PC-9 (cell line): ENCODE measurements at regions of chr19 and their contacts with region 1.

Region 1: DNA sequence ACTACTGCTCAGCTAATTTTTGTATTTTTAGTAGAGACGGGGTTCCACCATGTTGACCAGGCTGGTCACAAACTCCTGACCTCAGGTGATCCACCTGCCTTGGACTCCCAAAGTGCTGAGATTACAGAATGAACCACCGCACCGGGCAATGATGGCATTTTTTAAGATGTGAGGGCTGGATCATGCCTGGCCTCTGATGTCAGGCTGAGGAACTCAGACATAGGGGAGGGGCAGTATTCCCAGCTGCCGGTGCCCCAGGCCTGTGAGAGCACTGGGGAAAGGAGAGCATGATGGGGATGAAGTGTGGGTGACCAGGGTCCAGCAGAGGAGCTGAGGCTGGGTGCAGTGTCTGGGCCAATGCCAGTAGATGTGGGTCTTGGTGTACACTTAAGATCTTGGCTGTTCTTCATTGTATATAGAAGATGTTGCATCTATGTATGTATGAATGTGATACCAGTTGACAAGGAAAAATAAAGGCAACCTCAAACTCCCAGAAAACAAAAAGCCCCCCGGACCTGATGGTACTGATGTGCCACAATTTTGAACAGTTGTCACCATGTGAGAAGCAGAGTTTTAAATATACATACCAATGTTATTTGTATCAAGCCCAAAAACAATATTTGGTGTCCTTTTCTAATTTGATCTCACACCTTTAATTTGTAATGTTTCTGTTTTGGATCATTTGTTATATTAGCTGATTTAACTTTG is 3.4 kb upstream of the PLVAP start:
- DNase-seq: no peak
- H3K4me3 ChIP-seq: no peak overlapping the region
- H3K27ac ChIP-seq: no peak overlapping the region
- H3K4me1 ChIP-seq: peaks cover 9% of the 10 kb centered on the region
- H3K27me3 ChIP-seq: peaks cover 7% of the 10 kb centered on the region; the same call in 1 of the 2 replicates
- CTCF ChIP-seq: no peak

Region 2: DNA sequence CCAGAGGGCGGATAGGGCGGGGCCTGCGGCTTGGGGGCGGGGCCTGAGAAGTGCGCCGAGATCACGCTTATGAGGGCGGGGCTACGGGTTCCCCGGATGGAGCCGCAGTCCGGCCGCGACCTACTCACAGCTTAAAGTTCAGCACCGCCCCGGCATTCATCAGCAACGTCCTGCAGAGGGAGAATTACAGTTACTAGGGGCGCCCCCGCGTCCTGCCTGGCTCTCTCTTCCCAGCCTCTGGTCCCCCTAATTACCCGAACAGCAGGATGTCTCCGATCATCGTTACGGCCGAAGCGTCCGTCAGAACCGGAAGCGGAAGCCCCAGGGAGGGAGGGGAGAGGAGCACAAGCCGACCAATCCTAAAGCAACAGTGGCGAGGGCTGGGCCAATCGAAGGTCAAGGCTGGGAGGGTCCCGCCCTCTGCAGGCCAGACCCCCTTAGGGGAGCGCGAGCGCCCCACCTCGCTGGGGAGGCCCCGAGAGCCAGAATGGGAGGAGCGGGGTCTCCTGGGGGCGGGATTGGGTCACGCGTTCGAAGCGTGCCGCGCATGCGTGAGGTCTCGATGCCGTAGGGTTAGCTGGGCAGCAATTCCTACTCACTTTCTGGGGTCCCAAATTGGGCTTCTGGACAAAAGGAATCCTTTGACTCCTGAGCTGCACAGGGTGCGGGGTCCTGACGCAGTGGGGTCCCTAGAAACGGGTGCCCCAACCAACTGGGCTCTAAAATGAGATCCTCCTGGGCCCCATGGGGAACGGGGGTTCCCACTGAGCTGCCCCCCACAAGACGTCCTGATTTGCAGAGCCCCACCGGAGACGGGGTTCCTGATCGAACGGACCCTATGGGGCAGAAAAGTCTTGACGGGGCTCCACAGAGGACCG is 720.5 kb before region 1 on chr19 and contains the start of gene SMIM7:
- CTCF ChIA-PET with region 1: no interaction called
- POLR2A ChIA-PET with region 1: interaction called, 29 read pairs
- intact Hi-C with region 1: no loop called
- DNase-seq: peak; percentile 96 to 99
- H3K4me3 ChIP-seq: peak within 1 kb of the TSS; percentile 92
- H3K27ac ChIP-seq: peak within 1 kb of the TSS; percentile 40; the same call in 1 of the 2 replicates
- H3K4me1 ChIP-seq: peaks cover 22% of the 10 kb centered on the region
- H3K27me3 ChIP-seq: no peaks in the 10 kb centered on the region
- CTCF ChIP-seq: peak; percentile 25; the same call in 1 of the 2 replicates
- total RNA-seq, gene SMIM7: 69.7 and 72.9 TPM in 2 replicates

Region 3: GRCh38 chr19:17323964-17324332 is 56.6 kb before region 1 on chr19:
- CTCF ChIA-PET with region 1: no interaction called
- POLR2A ChIA-PET with region 1: no interaction called
- intact Hi-C with region 1: no loop called
- DNase-seq: no peak
- H3K4me3 ChIP-seq: no peak overlapping the region
- H3K27ac ChIP-seq: no peak overlapping the region
- H3K4me1 ChIP-seq: peaks cover 23% of the 10 kb centered on the region
- H3K27me3 ChIP-seq: no peaks in the 10 kb centered on the region
- CTCF ChIP-seq: no peak

Region 4: DNA sequence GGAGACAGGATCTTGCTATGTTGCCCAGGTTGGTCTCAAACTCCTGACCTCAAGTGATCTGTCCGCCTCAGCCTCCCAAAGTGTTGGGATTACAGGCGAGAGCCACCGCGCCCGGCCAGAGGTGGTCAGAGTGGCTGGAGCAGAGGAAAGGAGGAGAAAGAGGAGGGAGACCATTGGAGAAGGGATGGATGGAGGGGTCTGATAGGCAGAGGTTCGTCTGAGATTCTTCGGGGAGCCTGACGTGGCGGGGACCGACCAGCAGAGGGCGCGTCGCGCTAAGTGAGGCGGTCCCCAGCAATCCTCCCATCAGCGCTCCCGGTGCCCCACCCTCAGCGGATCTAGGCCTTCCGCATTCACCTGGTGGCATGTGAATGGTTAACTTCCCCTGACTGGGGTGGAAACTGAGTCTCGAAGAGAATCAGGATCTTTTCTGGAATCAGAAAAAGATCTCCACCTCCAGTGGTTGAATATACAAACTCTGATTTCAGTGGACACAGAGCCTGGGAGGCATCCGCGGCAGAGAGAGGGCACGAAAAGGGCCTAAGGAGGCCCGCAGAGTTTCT is 34.4 kb before region 1 on chr19:
- CTCF ChIA-PET with region 1: no interaction called
- POLR2A ChIA-PET with region 1: no interaction called
- intact Hi-C with region 1: loop called (anchors 1 kb)
- DNase-seq: peak in 1 of 2 experiments; percentile 79
- H3K4me3 ChIP-seq: no peak overlapping the region
- H3K27ac ChIP-seq: no peak overlapping the region
- H3K4me1 ChIP-seq: peaks cover 10% of the 10 kb centered on the region
- H3K27me3 ChIP-seq: no peaks in the 10 kb centered on the region
- CTCF ChIP-seq: peak; percentile 94

Region 5: GRCh38 chr19:17424743-17425365 is 44.3 kb after region 1 on chr19:
- CTCF ChIA-PET with region 1: no interaction called
- POLR2A ChIA-PET with region 1: no interaction called
- intact Hi-C with region 1: no loop called
- DNase-seq: no peak
- H3K4me3 ChIP-seq: no peak overlapping the region
- H3K27ac ChIP-seq: no peak overlapping the region
- H3K4me1 ChIP-seq: 0 out of 2 replicates have a peak, but pooled peaks cover 6% of the 10 kb centered on the region
- H3K27me3 ChIP-seq: no peaks in the 10 kb centered on the region
- CTCF ChIP-seq: 0 out of 2 replicates have a peak, but pooled peaks have one; percentile 34